ENCODE measurements at regions of chr15 and their contacts with region 1.

Region 1: DNA sequence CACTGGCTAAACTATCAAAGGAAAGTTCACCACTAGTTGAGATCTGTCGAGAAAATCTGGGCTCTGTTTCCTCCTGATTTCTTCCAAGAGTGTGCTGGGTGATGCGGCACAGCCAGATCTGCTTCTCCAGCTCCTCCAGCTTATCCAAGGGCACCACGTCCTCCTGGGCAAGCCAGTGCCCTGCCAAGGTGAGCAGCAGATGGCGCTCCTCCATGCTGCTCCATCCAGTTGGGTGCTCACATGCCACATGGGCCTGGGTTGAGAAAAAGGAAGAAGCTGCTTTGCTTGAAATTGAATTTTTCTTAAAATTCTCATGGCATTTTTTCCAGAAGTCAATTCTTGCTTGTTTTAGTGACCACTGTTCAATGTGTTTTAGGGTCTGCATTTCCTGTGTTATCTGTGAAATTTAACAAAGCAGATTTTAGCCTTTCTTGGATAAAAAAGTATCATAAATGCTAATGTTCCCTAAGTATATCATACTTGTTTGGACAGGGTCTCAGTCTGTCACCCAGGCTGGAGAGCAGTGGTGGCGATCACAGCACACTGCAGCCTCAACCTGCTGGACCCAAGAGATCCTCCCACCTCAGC is 47.3 kb downstream of the EIF3J start:
- DNase-seq: peak; percentile 49
- H3K4me3 ChIP-seq: no peak overlapping the region
- H3K27ac ChIP-seq: no peak overlapping the region
- H3K4me1 ChIP-seq: no peaks in the 10 kb centered on the region
- H3K27me3 ChIP-seq: no peaks in the 10 kb centered on the region
- CTCF ChIP-seq: peak; percentile 52 to 72
- POLR2A ChIP-seq: no peak

Region 2: DNA sequence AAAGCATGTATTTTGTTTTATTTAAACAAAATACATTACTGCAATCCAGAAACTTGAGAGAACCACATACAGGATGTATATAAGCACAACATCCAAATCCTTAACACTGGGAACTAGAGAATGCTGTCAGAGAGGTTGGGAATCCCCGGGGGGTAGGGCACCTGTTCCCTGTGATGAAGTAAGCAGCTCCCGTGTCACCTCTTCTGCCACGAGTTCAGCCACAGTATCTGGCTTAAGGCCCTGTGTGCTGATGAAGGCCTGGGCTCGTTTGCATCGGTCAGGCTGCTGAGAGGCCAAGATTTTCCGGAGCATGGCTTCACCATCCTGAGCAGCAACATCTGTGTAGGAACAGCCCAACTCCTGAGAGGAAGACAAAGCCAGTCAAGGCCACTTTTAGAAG is 10.9 kb before region 1 on chr15:
- CTCF ChIA-PET with region 1: interaction called, 39 read pairs
- POLR2A ChIA-PET with region 1: interaction called, 4 read pairs
- dilution Hi-C with region 1: no loop called
- intact Hi-C with region 1: no loop called
- DNase-seq: no peak
- H3K4me3 ChIP-seq: no peak overlapping the region
- H3K27ac ChIP-seq: no peak overlapping the region
- H3K4me1 ChIP-seq: no peaks in the 10 kb centered on the region
- H3K27me3 ChIP-seq: no peaks in the 10 kb centered on the region
- CTCF ChIP-seq: no peak
- POLR2A ChIP-seq: no peak

Region 3: GRCh38 chr15:44728576-44729407 is 144.5 kb after region 1 on chr15:
- CTCF ChIA-PET with region 1: interaction called, 3 read pairs
- POLR2A ChIA-PET with region 1: no interaction called
- dilution Hi-C with region 1: loop called (anchors 25 kb)
- intact Hi-C with region 1: no loop called
- DNase-seq: peak; percentile 99
- H3K4me3 ChIP-seq: peak overlapping the region; percentile 60 to 75 (median 69)
- H3K27ac ChIP-seq: peak overlapping the region; percentile 71
- H3K4me1 ChIP-seq: peaks cover 32% of the 10 kb centered on the region
- H3K27me3 ChIP-seq: no peaks in the 10 kb centered on the region
- CTCF ChIP-seq: no peak
- POLR2A ChIP-seq: peak; percentile 71

Region 4: GRCh38 chr15:44792715-44793114 is 208.5 kb after region 1 on chr15:
- CTCF ChIA-PET with region 1: no interaction called
- POLR2A ChIA-PET with region 1: no interaction called
- dilution Hi-C with region 1: no loop called
- intact Hi-C with region 1: no loop called
- DNase-seq: no peak
- H3K4me3 ChIP-seq: no peak overlapping the region
- H3K27ac ChIP-seq: no peak overlapping the region
- H3K4me1 ChIP-seq: peaks cover 3% of the 10 kb centered on the region
- H3K27me3 ChIP-seq: no peaks in the 10 kb centered on the region
- CTCF ChIP-seq: no peak
- POLR2A ChIP-seq: no peak